HCT116 (cell line): ENCODE measurements at regions of chr17 and their contacts with region 1.

Region 1: DNA sequence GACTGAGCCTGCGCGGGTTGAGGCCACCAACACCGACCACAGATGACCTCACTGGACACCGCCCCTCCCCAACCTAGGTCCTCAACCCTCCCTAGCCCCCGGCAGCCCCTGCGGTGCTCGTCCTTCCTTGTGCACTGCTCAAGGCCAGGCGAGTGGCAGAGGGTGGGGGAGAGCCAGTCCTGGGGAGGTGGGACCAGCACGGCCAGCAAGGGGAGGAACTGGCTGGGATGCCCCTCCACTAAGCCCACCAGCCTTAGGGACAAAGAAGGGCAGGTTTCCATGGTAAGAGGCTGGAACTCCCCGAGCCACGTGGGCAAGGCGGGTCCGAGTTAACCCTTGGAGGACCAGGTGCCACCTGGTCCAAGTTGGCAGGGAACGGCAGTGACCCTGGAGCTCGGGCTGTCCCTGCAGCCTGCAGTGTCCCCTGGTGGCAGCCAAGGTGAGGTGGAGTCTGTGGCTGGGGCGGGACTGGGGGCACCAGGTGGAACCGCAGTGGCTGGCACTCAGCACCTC is 9.2 kb downstream of the FSCN2 start:
- DNase-seq: peak; percentile 49
- ATAC-seq: peak; percentile 78
- H3K4me3 ChIP-seq: no peak overlapping the region
- H3K27ac ChIP-seq: no peak overlapping the region
- H3K4me1 ChIP-seq: peaks cover 3 to 7% of the 10 kb centered on the region in 2 experiments; a peak in 2 of 4 replicates
- H3K27me3 ChIP-seq: no peaks in the 10 kb centered on the region
- CTCF ChIP-seq: peak; percentile 83 to 97 (median 90); a peak in 5 of 6 replicates
- POLR2A ChIP-seq: no peak
- RAD21 ChIP-seq: peak; percentile 97

Region 2: GRCh38 chr17:81371910-81372760 is 165.3 kb before region 1 on chr17:
- CTCF ChIA-PET with region 1: no interaction called
- POLR2A ChIA-PET with region 1: no interaction called
- RAD21 ChIA-PET with region 1: no interaction called
- intact Hi-C with region 1: loop called (anchors 5 kb)
- DNase-seq: peak; percentile 35
- ATAC-seq: peak; percentile 92
- H3K4me3 ChIP-seq: no peak overlapping the region
- H3K27ac ChIP-seq: no peak overlapping the region; the same call in 1 of the 2 replicates
- H3K4me1 ChIP-seq: peaks cover 0 to 11% of the 10 kb centered on the region in 2 experiments; a peak in 1 of 4 replicates
- H3K27me3 ChIP-seq: peaks cover 1% of the 10 kb centered on the region; the same call in 1 of the 2 replicates
- CTCF ChIP-seq: peak in 2 of 3 experiments; percentile 67 to 75; a peak in 4 of 6 replicates
- POLR2A ChIP-seq: no peak
- RAD21 ChIP-seq: peak; percentile 80